Stomach (tissue), 19 donors: ENCODE measurements at regions of chr11 and their contacts with region 1.

Region 1: DNA sequence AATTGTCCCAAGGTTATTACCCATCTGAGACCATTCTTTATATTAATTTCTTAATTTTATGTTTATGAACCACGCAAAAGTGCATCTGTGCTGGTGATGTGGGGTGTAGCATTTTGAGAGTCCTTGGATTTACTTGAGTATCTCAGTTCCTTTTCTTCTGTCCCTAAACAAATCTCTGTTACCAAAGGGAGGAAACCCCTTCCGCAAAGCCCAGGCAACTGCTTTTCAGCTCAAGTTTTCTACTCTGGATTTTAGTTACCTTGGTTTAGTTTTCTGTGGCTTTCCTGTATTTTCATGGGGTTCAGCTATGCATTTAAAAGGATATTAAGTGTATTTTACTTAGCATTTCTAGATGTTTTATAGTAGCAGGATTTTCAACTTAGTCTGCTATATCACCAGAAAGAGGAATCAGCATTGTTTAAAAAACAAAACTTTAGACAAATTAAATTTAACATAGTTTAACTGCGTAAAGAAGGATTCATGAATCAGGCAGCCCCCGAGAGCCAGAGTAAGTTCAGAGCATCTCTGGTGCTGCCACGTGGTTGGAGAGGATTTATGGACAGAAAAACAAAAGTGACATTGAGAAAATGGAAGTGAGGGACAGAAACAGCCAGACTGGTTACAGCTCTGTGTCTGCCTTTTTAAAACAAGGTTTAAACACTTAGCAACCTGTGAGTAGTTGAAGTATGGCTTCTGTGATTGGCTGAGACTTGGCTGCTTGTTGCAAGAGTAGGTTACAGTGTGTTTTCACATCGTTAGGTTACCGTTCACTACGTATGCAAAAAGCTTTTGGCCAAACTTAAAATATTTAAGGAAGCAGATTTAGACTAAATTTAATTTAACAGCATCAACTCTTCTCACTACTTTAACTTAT is 9.6 kb downstream of the ADM start:
- DNase-seq: peak in 1 of 2 donors; percentile 81
- H3K4me3 ChIP-seq: no peak overlapping the region
- H3K27ac ChIP-seq: no peak overlapping the region
- H3K4me1 ChIP-seq: peaks cover 5 to 25% (median 15%) of the 10 kb centered on the region in 4 donors
- H3K27me3 ChIP-seq: no peaks in the 10 kb centered on the region
- CTCF ChIP-seq: no peak
- EP300 ChIP-seq: no peak
- POLR2A ChIP-seq: no peak

Region 2: GRCh38 chr11:9757809-9758636 is 556.4 kb before region 1 on chr11:
- intact Hi-C with region 1: loop called (anchors 10 kb)
- DNase-seq: peak; percentile 88 to 95
- H3K4me3 ChIP-seq: peak overlapping the region; percentile 61 to 80 (median 76)
- H3K27ac ChIP-seq: peak overlapping the region; percentile 68 to 92 (median 90)
- H3K4me1 ChIP-seq: peaks cover 23 to 52% (median 33%) of the 10 kb centered on the region in 4 donors
- H3K27me3 ChIP-seq: no peaks in the 10 kb centered on the region
- CTCF ChIP-seq: peak in 3 of 7 experiments; percentile 84 to 96 (median 91)
- EP300 ChIP-seq: no peak
- POLR2A ChIP-seq: no peak

Region 3: DNA sequence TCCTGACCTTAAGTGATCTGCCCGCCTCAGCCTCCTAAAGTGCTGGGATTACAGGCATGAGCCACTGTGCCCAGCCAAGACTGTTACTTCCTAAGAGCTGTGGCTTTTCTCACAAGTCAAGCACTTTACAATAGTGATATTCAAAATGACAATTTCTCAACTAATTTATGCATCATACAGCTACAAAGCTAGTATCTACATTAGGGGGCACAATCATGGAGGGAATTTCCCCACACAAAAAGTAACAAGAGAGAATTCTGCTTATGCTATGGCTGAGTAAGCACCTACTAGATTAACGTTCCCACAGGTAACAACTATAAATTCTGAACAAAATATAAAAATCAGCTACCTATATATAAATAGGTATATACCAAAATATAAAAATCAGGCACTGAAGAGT is 93.1 kb before region 1 on chr11:
- intact Hi-C with region 1: no loop called
- DNase-seq: no peak
- H3K4me3 ChIP-seq: no peak overlapping the region
- H3K27ac ChIP-seq: no peak overlapping the region
- H3K4me1 ChIP-seq: peaks cover 0 to 4% (median 0%) of the 10 kb centered on the region in 4 donors
- H3K27me3 ChIP-seq: no peaks in the 10 kb centered on the region
- CTCF ChIP-seq: no peak
- EP300 ChIP-seq: no peak
- POLR2A ChIP-seq: no peak

Region 4: DNA sequence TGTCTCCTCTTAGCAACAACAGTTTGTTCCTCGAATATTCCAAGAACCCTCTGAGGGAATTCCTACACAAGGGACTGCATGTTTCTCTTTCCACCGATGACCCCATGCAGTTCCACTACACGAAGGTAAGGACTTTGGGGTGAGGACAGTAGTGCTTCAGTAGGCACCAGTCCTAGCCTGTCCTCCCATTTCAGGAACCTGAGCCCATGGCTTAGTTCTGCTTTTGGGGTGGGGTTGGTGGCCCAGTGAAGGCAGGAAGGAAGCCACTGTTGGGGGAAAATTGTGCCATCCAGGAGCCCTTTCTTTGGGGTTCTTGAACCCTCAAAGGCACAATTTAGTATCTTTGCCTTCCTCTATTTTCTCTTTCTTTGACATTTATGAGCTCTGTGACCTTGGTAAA is 188.3 kb after region 1 on chr11:
- intact Hi-C with region 1: no loop called
- DNase-seq: no peak
- H3K4me3 ChIP-seq: no peak overlapping the region
- H3K27ac ChIP-seq: peak overlapping the region in 2 of 5 donors; percentile 67
- H3K4me1 ChIP-seq: peaks cover 0 to 6% (median 0%) of the 10 kb centered on the region in 4 donors
- H3K27me3 ChIP-seq: no peaks in the 10 kb centered on the region
- CTCF ChIP-seq: no peak
- EP300 ChIP-seq: no peak
- POLR2A ChIP-seq: no peak

Region 5: GRCh38 chr11:10606536-10607208 is 292.2 kb after region 1 on chr11:
- intact Hi-C with region 1: no loop called
- DNase-seq: no peak
- H3K4me3 ChIP-seq: no peak overlapping the region
- H3K27ac ChIP-seq: peak overlapping the region in 4 of 5 donors; percentile 67 to 90 (median 84)
- H3K4me1 ChIP-seq: peaks cover 4 to 63% (median 17%) of the 10 kb centered on the region in 4 donors
- H3K27me3 ChIP-seq: no peaks in the 10 kb centered on the region
- CTCF ChIP-seq: no peak
- EP300 ChIP-seq: no peak
- POLR2A ChIP-seq: no peak